Posterior cingulate gyrus (tissue), 11 donors: ENCODE measurements at regions of chr4 and their contacts with region 1.

Region 1: DNA sequence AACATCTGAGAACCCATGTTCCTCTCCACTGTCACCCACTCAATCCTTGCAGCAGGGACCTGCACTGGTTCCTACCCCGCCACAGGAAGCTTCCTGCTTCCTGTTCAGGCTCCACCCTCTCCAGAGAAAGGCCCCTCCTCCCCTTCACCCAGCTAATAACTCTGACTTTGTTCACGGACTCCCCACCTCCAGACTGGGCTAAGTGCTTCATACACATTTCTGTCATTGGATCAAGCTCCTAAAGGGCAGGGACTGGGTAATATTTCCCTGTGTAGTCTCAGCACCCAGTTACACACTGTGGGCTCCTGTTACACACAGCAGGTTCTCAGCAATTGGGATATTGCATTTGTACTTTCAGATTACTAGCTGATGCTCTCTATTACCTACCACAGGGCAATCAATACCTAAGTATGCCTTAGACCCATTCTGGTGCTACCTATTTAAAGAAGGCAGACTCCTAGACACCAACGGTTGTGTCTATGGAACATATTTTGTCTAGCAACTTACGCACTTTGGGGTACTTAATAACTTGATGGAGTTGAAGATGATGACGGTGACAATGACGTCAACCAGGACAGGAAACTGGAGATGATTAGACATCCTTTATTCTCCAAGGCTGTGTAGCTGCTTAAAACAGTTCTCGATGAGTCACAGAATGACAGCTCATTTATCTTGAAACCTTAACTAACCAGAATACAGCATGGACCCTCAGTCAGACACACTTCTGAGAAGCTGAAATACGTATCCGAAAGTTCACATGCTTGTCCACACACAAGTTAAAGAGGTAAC is 58.1 kb downstream of the MAML3 start:
- DNase-seq: peak in 1 of 10 donors; percentile 27

Region 2: GRCh38 chr4:140061194-140061593 is 34.7 kb before region 1 on chr4:
- intact Hi-C with region 1: loop called (anchors 5 kb)
- DNase-seq: no peak